ENCODE measurements at regions of chr3 and their contacts with region 1.

Region 1: GRCh38 chr3:85576091-85576690 is 617.4 kb downstream of the CADM2 start:
- DNase-seq: peak; percentile 61
- H3K4me3 ChIP-seq: no peak overlapping the region
- H3K27ac ChIP-seq: no peak overlapping the region
- H3K4me1 ChIP-seq: no peaks in the 10 kb centered on the region
- H3K27me3 ChIP-seq: no peaks in the 10 kb centered on the region
- CTCF ChIP-seq: peak; percentile 69 to 72
- POLR2A ChIP-seq: no peak

Region 2: DNA sequence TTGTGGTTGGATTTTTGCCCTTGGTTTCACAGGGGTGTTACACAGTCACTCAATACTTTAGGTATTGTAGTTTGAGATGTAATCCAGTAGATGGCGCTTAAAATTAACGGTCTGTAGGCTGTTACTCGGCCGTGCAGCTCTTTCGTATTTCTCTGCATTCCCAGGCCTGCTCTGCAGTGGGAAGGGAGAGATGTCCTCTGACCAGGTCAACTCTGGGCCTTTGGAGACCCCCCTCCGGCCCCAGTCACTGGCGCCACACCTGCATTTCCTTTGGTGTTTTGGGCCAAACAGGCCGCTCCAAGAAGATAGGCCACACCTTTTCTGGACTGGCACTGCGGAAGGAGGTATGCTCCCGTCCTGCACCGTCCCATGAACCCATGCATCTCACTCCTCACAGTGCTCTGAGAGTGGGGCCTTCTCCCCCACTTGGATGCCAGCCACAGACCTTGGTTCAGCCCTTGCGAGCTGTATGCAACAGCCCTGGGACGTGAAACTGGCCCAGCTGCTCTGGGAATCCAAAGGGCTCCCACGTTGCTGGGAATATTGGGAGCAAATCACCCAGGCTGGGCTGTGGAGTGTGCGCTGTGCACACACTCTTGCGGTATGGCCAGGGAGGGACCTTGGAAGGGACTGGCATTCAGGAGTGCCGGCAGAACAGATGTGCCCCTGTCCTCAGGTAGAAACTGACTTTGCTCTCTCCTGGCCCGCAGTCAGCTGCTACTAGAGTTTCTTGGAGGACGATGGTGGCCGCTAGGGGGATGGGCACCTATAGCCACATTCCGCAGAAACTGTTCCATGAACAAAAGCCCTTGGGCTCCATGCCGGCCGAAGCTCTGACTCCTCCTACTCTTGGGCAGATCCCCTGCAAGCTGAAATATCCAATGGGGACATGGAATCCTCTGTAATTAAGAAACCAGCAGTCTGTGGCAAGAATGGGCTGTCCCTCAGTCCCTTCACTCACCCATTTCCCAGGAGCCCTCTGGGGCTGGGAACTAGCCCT is 1027.9 kb before region 1 on chr3:
- CTCF ChIA-PET with region 1: no interaction called
- POLR2A ChIA-PET with region 1: no interaction called
- dilution Hi-C with region 1: no loop called
- intact Hi-C with region 1: loop called (anchors 1 kb)
- DNase-seq: no peak
- H3K4me3 ChIP-seq: no peak overlapping the region
- H3K27ac ChIP-seq: no peak overlapping the region
- H3K4me1 ChIP-seq: no peaks in the 10 kb centered on the region
- H3K27me3 ChIP-seq: no peaks in the 10 kb centered on the region
- CTCF ChIP-seq: peak; percentile 5 to 8
- POLR2A ChIP-seq: no peak

Region 3: DNA sequence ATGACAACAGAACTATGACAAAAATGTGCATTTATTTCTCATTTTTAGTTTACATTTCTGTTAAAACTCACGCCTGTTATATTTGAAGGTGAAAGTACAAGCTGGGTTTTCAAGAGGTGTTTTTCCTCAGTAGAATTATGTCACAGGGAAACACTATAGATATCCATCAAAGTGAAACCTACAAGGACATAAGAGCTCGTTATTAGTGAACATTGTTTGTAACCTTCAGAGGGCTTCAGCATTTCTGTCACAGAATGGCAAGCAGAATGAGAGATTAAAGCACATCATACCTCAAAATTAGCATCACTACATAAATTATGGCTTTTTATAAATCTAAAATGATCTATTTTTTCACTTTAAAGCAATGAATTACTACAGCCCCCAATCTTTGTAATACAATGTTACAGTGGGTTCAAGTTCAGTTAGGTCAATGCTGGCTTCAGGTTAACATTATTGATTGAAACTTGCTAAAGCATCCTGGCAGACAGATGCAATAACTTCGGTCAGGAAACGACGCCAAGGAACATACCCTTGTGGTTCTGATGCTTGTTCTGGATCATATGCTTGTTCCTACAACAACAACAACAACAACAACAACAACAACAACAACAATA is 211.8 kb before region 1 on chr3:
- CTCF ChIA-PET with region 1: no interaction called
- POLR2A ChIA-PET with region 1: no interaction called
- dilution Hi-C with region 1: no loop called
- intact Hi-C with region 1: no loop called
- DNase-seq: no peak
- H3K4me3 ChIP-seq: no peak overlapping the region
- H3K27ac ChIP-seq: no peak overlapping the region
- H3K4me1 ChIP-seq: no peaks in the 10 kb centered on the region
- H3K27me3 ChIP-seq: no peaks in the 10 kb centered on the region
- CTCF ChIP-seq: no peak
- POLR2A ChIP-seq: no peak